Cardiac septum (tissue), 1 donor: ENCODE measurements at regions of chr5 and their contacts with region 1.

Region 1: GRCh38 chr5:683551-684481 is 9.3 kb downstream of the TPPP start:
- DNase-seq: peak; percentile 74

Region 2: GRCh38 chr5:776792-777711 is 93.2 kb after region 1 on chr5:
- intact Hi-C with region 1: loop called (anchors 10 kb)
- DNase-seq: no peak